HepG2 (cell line): ENCODE measurements at regions of chr6 and their contacts with region 1.

Region 1: GRCh38 chr6:82247634-82248232 is at the start of gene IBTK:
- DNase-seq: peak; percentile 94
- ATAC-seq: peak; percentile 88
- H3K4me3 ChIP-seq: peak within 1 kb of the TSS; percentile 73 to 87 (median 83)
- H3K27ac ChIP-seq: peak within 1 kb of the TSS; percentile 100
- H3K4me1 ChIP-seq: peaks cover 45% of the 10 kb centered on the region
- H3K27me3 ChIP-seq: no peaks in the 10 kb centered on the region; a peak in 1 of 5 replicates
- CTCF ChIP-seq: no peak
- EP300 ChIP-seq: peak in 1 of 2 experiments; percentile 39; a peak in 1 of 4 replicates
- POLR2A ChIP-seq: peak; percentile 27 to 71; a peak in 3 of 4 replicates
- RAD21 ChIP-seq: peak; percentile 7; the same call in 1 of the 2 replicates
- total RNA-seq, gene IBTK: 60.0 and 94.7 TPM in 2 replicates

Region 2: GRCh38 chr6:81384921-81385320 is 862.8 kb before region 1 on chr6:
- CTCF ChIA-PET with region 1: no interaction called
- POLR2A ChIA-PET with region 1: interaction called, 3 read pairs
- in situ Hi-C with region 1: no loop called
- intact Hi-C with region 1: loop called (anchors 5 kb)
- DNase-seq: no peak
- ATAC-seq: no peak
- H3K4me3 ChIP-seq: no peak overlapping the region
- H3K27ac ChIP-seq: no peak overlapping the region
- H3K4me1 ChIP-seq: peaks cover 47% of the 10 kb centered on the region
- H3K27me3 ChIP-seq: no peaks in the 10 kb centered on the region
- CTCF ChIP-seq: no peak
- EP300 ChIP-seq: no peak
- POLR2A ChIP-seq: no peak
- RAD21 ChIP-seq: no peak

Region 3: GRCh38 chr6:82080767-82081166 is 167.0 kb before region 1 on chr6:
- CTCF ChIA-PET with region 1: no interaction called
- POLR2A ChIA-PET with region 1: interaction called, 3 read pairs
- in situ Hi-C with region 1: no loop called
- intact Hi-C with region 1: loop called (anchors 10 kb)
- DNase-seq: no peak
- ATAC-seq: no peak
- H3K4me3 ChIP-seq: no peak overlapping the region
- H3K27ac ChIP-seq: no peak overlapping the region
- H3K4me1 ChIP-seq: peaks cover 61% of the 10 kb centered on the region
- H3K27me3 ChIP-seq: no peaks in the 10 kb centered on the region
- CTCF ChIP-seq: no peak
- EP300 ChIP-seq: no peak
- POLR2A ChIP-seq: no peak
- RAD21 ChIP-seq: no peak

Region 4: DNA sequence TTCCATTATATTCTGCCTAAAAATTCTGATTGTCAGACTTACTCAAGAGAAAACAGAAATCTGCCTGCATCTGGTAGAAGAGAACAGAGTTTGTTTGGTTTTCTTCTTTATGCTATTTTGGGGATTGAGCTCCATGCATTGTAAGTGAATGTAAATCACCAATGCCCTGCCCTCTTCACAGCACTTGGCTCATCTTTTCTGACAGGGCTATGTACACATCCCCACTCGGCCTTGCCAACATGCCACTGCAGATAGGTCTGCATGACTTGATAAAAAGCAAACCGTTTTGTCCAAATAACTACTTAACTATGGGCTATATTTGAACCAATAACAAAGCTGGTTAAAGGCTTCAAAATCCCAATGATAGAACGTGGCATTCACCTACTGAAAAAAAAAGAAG is 117.9 kb before region 1 on chr6:
- CTCF ChIA-PET with region 1: no interaction called
- POLR2A ChIA-PET with region 1: no interaction called
- in situ Hi-C with region 1: no loop called
- intact Hi-C with region 1: no loop called
- DNase-seq: peak; percentile 10
- ATAC-seq: no peak
- H3K4me3 ChIP-seq: no peak overlapping the region
- H3K27ac ChIP-seq: no peak overlapping the region
- H3K4me1 ChIP-seq: 0 out of 2 replicates have a peak, but pooled peaks cover 5% of the 10 kb centered on the region
- H3K27me3 ChIP-seq: no peaks in the 10 kb centered on the region
- CTCF ChIP-seq: no peak
- EP300 ChIP-seq: no peak
- POLR2A ChIP-seq: no peak
- RAD21 ChIP-seq: no peak

Region 5: DNA sequence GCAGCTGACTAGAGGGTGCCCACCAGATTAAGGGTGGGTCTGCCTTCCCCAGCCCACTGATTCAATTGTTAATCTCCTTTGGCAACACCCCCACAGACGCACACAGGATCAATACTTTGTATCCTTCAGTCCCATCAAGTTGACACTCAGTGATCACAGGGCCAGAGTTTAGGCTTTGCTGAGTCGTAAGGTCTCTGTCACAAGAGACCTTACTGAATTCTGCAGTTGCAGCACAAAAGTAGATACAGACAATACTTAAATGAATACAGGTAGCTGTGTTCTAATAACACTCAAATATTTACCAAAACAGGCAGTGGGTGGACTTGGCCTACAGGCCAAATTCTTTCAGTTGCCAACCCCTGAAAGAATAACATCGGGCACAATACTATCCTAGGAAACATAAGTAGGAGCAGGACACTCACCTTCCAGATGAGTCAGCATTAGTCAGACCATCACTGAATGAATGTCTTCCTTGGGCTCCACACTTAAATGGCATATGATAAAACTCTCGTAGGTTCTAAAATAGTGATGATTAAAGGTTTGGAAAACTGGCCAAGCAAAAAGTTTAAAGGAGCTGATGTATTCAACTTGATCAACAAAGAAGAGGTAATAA is 627.9 kb after region 1 on chr6:
- CTCF ChIA-PET with region 1: no interaction called
- POLR2A ChIA-PET with region 1: no interaction called
- in situ Hi-C with region 1: no loop called
- intact Hi-C with region 1: loop called (anchors 5 kb)
- DNase-seq: no peak
- ATAC-seq: peak; percentile 19; the same call in 2 of the 3 replicates
- H3K4me3 ChIP-seq: no peak overlapping the region
- H3K27ac ChIP-seq: no peak overlapping the region
- H3K4me1 ChIP-seq: peaks cover 23% of the 10 kb centered on the region
- H3K27me3 ChIP-seq: no peaks in the 10 kb centered on the region; a peak in 1 of 5 replicates
- CTCF ChIP-seq: no peak
- EP300 ChIP-seq: no peak
- POLR2A ChIP-seq: no peak
- RAD21 ChIP-seq: no peak

Region 6: GRCh38 chr6:83067448-83068413 is 820.0 kb after region 1 on chr6 and contains the start of gene DOP1A:
- CTCF ChIA-PET with region 1: no interaction called
- POLR2A ChIA-PET with region 1: interaction called, 43 read pairs
- in situ Hi-C with region 1: loop called (anchors 5 kb)
- intact Hi-C with region 1: loop called (anchors 5 kb)
- DNase-seq: peak; percentile 86
- ATAC-seq: peak; percentile 91
- H3K4me3 ChIP-seq: peak within 1 kb of the TSS; percentile 79 to 87 (median 86)
- H3K27ac ChIP-seq: peak within 1 kb of the TSS; percentile 85
- H3K4me1 ChIP-seq: peaks cover 30% of the 10 kb centered on the region
- H3K27me3 ChIP-seq: no peaks in the 10 kb centered on the region; a peak in 1 of 5 replicates
- CTCF ChIP-seq: peak; percentile 97
- EP300 ChIP-seq: no peak
- POLR2A ChIP-seq: peak; percentile 67 to 76
- RAD21 ChIP-seq: peak; percentile 89
- total RNA-seq, gene DOP1A: 16.7 and 18.9 TPM in 2 replicates

Region 7: GRCh38 chr6:83215131-83216047 is 967.7 kb after region 1 on chr6:
- CTCF ChIA-PET with region 1: no interaction called
- POLR2A ChIA-PET with region 1: no interaction called
- in situ Hi-C with region 1: no loop called
- intact Hi-C with region 1: loop called (anchors 10 kb)
- DNase-seq: peak; percentile 66
- ATAC-seq: peak; percentile 99
- H3K4me3 ChIP-seq: no peak overlapping the region
- H3K27ac ChIP-seq: no peak overlapping the region
- H3K4me1 ChIP-seq: no peaks in the 10 kb centered on the region
- H3K27me3 ChIP-seq: no peaks in the 10 kb centered on the region; a peak in 1 of 5 replicates
- CTCF ChIP-seq: peak; percentile 89
- EP300 ChIP-seq: no peak
- POLR2A ChIP-seq: no peak
- RAD21 ChIP-seq: peak; percentile 69; the same call in 1 of the 2 replicates